OCI-LY7 (cell line): ENCODE measurements at regions of chr15 and their contacts with region 1.

Region 1: DNA sequence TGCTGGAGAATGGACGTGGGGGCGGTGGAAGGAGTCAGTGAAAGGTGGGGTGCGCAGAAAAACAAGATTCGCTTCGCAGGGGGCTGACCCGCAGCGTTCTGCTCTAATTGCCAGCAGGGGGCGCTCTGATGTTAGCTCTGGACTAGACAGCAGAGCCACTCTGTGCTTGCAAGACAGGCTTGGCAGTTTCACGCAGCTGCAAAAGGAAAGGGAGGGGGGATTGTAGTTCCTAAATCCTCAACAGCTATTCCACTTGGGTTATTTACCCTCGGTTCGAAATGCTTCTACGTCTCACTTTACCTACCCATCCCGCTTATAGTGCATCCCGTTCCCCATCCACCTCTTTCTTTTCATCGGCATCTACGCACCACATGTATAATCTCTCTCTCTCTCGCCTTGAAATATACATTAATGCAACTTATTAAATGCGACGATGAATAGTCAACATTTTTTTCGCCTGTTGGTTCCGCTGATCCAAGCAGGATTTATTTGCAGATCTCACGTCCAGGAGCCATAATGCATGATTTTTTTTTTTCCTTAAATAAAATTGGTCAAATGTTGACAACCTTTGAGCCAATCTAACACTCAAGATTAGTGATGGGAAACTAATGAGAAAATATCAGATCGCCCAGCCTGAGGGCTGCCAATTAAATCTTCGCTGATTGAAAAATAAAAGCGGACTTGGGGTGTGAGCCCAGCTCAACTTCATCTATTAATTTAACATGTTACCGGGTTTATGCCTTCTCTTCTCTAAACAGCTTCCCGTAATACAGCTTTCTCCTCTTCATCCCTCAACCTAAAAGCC is 216.4 kb downstream of the MEIS2 start:
- DNase-seq: peak; percentile 87
- H3K4me3 ChIP-seq: no peak overlapping the region
- H3K27ac ChIP-seq: no peak overlapping the region
- H3K4me1 ChIP-seq: no peaks in the 10 kb centered on the region
- CTCF ChIP-seq: peak; percentile 88

Region 2: DNA sequence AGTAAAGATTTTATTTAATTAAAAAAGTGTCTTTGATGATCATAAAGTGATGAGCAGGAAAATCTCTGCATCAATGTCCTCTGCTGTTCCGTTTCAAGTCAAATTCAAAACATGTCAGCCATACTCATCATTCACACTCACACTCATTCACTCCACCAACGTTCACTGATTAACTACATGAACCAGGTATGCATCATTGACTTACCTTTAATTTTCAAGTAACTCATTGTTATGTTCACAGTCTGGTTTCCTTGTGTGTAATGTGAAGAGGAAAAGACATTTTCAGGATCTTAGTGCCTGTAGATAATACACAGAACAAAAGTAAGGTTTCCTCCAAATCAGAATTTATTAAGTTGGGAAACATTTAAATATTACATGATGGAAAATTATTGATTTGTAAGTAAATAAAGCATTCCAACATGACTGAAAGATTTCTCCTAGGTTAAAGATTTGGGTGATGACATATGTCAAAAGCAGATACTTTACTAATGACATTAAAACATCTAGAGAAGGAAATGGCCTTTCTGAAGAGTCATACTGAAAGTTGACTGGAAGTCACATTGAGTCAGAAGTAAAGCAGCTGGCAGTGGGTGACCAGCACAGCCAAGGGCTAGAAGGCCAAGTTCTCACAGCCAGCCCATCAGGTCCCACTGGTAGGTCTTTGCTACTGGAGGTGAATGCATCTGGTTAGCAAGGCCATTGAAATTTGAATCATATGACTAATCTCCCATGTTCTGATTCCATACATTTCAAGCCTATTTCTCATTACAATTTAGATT is 52.6 kb before region 1 on chr15:
- CTCF ChIA-PET with region 1: no interaction called
- POLR2A ChIA-PET with region 1: no interaction called
- intact Hi-C with region 1: no loop called
- DNase-seq: no peak
- H3K4me3 ChIP-seq: no peak overlapping the region
- H3K27ac ChIP-seq: no peak overlapping the region
- H3K4me1 ChIP-seq: no peaks in the 10 kb centered on the region
- CTCF ChIP-seq: no peak

Region 3: DNA sequence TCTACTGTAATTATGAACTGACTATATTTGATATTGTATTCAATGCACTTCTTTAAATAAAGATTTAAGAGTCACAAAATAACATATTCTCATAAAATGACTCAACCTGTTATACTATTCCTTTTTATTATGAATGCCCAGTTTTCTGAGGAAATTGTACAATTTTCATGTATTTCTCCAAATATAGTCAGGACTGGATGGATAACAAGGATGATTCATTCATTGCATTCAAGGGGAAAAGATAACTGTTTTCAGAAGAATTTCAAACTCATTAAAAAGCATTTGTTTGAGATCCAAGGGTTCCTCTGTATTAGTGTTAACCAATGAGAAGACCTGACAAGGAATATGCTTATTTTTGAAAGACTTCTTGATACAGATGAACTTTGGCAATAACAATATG is 52.7 kb after region 1 on chr15:
- CTCF ChIA-PET with region 1: no interaction called
- POLR2A ChIA-PET with region 1: no interaction called
- intact Hi-C with region 1: no loop called
- DNase-seq: no peak
- H3K4me3 ChIP-seq: no peak overlapping the region
- H3K27ac ChIP-seq: no peak overlapping the region
- H3K4me1 ChIP-seq: no peaks in the 10 kb centered on the region
- CTCF ChIP-seq: no peak

Region 4: DNA sequence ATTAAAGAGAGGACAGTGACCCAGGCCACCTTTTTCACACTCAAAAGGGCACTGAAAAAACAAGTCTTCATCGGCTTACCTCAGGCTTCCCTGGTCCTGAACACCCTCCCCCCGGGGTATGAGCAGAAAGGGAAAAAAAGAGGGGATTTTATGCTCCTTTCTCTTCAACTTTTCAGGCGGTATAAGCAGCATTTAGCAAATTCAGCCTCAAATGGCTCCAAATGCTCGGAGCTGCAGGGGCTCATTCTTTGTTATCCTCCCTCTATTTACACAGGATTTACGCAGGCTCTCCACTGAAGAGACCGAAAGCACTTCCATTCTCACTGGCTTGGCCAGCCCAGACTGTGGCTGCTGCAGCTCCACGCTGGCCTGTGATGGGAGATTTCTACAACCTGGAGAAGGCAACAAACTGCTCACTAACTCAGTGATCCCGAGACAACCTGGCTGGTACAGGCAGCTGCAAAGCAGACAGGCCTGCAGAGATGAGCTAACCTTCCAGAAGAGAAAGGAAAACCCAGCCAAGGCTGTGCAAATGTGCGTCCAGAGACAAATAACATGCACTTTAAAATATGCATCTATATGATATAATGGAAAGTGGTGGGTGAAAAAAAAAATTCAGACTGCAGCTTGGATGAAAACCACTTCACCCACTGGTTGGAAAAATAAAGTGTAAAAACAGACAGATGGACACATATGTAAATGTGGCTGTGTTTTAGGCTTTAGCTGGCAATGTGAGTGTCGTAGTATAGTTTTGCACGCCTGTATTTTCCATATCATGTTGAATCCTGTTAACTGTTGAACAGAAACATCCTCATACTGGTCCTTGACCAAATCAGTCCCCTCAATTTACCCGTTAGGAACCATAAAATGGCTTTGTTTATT is 162.2 kb after region 1 on chr15:
- CTCF ChIA-PET with region 1: no interaction called
- POLR2A ChIA-PET with region 1: no interaction called
- intact Hi-C with region 1: no loop called
- DNase-seq: no peak
- H3K4me3 ChIP-seq: no peak overlapping the region
- H3K27ac ChIP-seq: no peak overlapping the region
- H3K4me1 ChIP-seq: no peaks in the 10 kb centered on the region
- CTCF ChIP-seq: no peak

Region 5: GRCh38 chr15:37106490-37107001 is 222.6 kb after region 1 on chr15:
- CTCF ChIA-PET with region 1: interaction called, 3 read pairs
- POLR2A ChIA-PET with region 1: no interaction called
- intact Hi-C with region 1: loop called (anchors 1 kb)
- DNase-seq: peak; percentile 62
- H3K4me3 ChIP-seq: peak overlapping the region; percentile 15
- H3K27ac ChIP-seq: no peak overlapping the region
- H3K4me1 ChIP-seq: peaks cover 11% of the 10 kb centered on the region
- CTCF ChIP-seq: peak; percentile 82

Region 6: DNA sequence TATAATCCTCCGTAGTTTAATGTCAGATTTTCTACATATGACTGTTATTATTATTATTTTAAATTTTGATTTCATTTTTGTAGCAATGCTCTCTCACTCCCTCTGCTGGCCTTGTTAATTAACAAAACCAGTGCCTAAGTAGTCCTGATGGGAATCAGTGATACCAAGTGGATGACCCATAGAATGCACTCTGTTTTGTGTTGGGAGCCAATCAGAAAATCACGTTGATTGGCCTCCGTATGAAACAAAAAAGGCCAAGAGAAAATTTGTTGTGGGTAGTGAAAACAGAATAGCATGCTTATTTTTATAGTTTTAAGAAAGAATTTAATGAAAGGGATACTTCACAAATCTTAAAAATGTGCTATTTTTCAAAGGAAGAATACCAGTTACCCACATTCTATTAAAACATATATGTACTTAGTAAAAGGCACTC is 250.8 kb after region 1 on chr15:
- CTCF ChIA-PET with region 1: no interaction called
- POLR2A ChIA-PET with region 1: no interaction called
- intact Hi-C with region 1: loop called (anchors 1 kb)
- DNase-seq: peak; percentile 46
- H3K4me3 ChIP-seq: no peak overlapping the region
- H3K27ac ChIP-seq: no peak overlapping the region
- H3K4me1 ChIP-seq: no peaks in the 10 kb centered on the region
- CTCF ChIP-seq: peak; percentile 85